IMR-90 (cell line): ENCODE measurements at regions of chr9 and their contacts with region 1.

Region 1: DNA sequence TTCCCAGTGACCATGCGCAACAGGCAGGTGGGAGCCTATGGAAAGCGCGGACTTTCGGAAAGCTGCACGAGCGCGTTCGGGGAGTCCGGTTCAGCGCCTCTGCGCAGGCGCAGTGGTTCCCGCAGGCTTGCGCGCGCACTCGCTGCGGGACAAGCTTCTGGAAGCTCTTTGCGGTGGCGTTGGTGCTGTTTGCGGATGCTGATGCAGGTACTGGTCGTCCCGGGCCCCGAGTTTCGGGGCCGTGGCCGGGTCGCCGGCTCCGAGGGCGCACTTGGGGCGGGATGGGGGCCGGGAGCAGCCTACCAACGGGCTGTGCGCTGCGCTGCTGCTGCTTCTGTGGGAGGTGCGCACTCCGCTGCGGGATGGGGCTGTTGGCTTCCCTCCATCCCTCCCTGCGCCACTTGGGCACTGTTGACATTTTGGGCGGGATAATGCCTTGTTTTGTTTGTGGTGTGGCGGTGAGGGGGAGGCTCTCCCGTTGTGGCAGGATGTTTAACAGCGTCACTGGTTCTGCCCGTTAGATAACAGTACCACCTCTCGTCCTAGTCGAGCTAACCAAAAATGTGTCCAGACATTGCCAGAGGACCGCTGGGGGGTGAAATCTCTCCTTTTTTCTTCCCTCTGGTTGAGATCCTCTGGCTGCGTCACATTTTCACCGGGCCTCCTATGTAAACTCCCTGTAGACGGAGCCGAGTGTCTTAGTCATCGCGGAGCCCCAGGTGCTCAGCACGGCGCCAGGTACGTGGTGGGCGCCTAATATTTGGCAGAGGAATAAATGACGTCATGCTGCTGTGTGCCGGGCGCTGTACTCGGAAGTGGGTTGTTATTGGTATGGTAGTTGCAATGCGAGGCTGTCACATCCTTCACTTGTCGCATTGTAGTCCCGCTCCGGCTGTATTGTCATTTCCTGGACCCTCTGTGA is at the start of gene ZNF483:
- DNase-seq: peak; percentile 75
- ATAC-seq: peak; percentile 93
- H3K4me3 ChIP-seq: peak within 1 kb of the TSS; percentile 85
- H3K27ac ChIP-seq: no peak within 1 kb of the TSS
- H3K4me1 ChIP-seq: peaks cover 4% of the 10 kb centered on the region
- H3K27me3 ChIP-seq: peaks cover 3% of the 10 kb centered on the region; the same call in 1 of the 2 replicates
- CTCF ChIP-seq: no peak
- POLR2A ChIP-seq: no peak
- RAD21 ChIP-seq: no peak
- total RNA-seq, gene ZNF483: 0.90 and 1.4 TPM in 2 replicates

Region 2: GRCh38 chr9:111436571-111436970 is 88.7 kb before region 1 on chr9:
- CTCF ChIA-PET with region 1: no interaction called
- POLR2A ChIA-PET with region 1: no interaction called
- dilution Hi-C with region 1: no loop called
- in situ Hi-C with region 1: no loop called
- intact Hi-C with region 1: no loop called
- DNase-seq: no peak
- ATAC-seq: no peak
- H3K4me3 ChIP-seq: no peak overlapping the region
- H3K27ac ChIP-seq: no peak overlapping the region
- H3K4me1 ChIP-seq: no peaks in the 10 kb centered on the region
- H3K27me3 ChIP-seq: no peaks in the 10 kb centered on the region
- CTCF ChIP-seq: no peak
- POLR2A ChIP-seq: no peak
- RAD21 ChIP-seq: no peak

Region 3: DNA sequence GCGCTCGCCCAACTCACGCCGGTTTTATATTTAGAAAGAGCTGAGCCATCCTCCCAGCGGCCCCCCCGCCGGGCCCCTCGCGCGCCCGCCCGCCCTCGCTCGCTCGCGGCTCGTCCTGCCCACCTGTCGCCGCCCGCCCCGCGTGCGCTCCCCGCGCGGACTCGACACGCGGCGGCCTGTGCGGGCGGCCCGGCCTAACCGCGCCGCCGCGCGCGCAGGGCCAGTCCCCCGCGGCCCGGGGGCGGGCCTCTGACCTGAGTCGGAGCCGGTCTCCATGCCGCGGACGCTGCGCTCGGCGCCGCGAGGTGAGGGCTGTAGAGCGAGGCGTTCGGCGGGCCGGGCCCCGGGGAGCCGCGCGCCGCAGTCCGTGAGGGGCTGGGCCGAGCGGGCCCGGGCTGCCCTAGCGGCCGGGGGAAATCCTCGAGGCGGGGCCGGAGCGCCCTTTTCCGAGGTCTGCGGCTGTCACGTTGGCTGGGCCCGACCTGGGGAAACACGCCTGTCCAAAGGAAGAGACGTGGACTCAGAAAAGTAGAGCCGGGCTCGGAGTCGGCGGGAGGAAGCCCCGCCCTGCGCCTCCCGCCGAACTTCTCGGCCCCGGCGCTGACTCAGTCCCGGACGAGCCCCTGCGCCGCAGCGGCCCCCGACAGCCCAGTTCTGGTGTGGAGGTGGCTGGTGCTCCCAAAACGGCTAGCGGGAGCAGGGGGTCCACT is 41.3 kb before region 1 on chr9 and contains the start of gene ECPAS:
- CTCF ChIA-PET with region 1: no interaction called
- POLR2A ChIA-PET with region 1: no interaction called
- dilution Hi-C with region 1: no loop called
- in situ Hi-C with region 1: no loop called
- intact Hi-C with region 1: loop called (anchors 1 kb)
- DNase-seq: peak; percentile 78
- ATAC-seq: peak; percentile 75
- H3K4me3 ChIP-seq: peak within 1 kb of the TSS; percentile 75
- H3K27ac ChIP-seq: peak within 1 kb of the TSS; percentile 76
- H3K4me1 ChIP-seq: peaks cover 2% of the 10 kb centered on the region; the same call in 1 of the 2 replicates
- H3K27me3 ChIP-seq: no peaks in the 10 kb centered on the region; the same call in 1 of the 2 replicates
- CTCF ChIP-seq: peak; percentile 13; the same call in 1 of the 2 replicates
- POLR2A ChIP-seq: peak; percentile 52
- RAD21 ChIP-seq: 0 out of 2 replicates have a peak, but pooled peaks have one; percentile 6
- total RNA-seq, gene ECPAS: 54.8 and 78.9 TPM in 2 replicates